Heart right ventricle (tissue), 16 donors: ENCODE measurements at regions of chr2 and their contacts with region 1.

Region 1: GRCh38 chr2:61460163-61460562 is 10.7 kb downstream of the USP34 start:
- DNase-seq: no peak
- ATAC-seq: peak in 1 of 8 donors; percentile 64
- H3K4me3 ChIP-seq: no peak overlapping the region
- H3K27ac ChIP-seq: peak overlapping the region in 2 of 10 donors; percentile 51 to 53
- H3K4me1 ChIP-seq: peaks cover 1 to 73% (median 65%) of the 10 kb centered on the region in 9 donors
- H3K27me3 ChIP-seq: no peaks in the 10 kb centered on the region
- CTCF ChIP-seq: no peak

Region 2: GRCh38 chr2:61356261-61356957 is 103.8 kb before region 1 on chr2:
- intact Hi-C with region 1: loop called in 1 of 10 experiments (anchors 10 kb)
- DNase-seq: no peak
- ATAC-seq: peak in 6 of 8 donors; percentile 17 to 51 (median 26)
- H3K4me3 ChIP-seq: no peak overlapping the region
- H3K27ac ChIP-seq: peak overlapping the region in 4 of 10 donors; percentile 12 to 30 (median 28)
- H3K4me1 ChIP-seq: peaks cover 0 to 47% (median 33%) of the 10 kb centered on the region in 9 donors
- H3K27me3 ChIP-seq: no peaks in the 10 kb centered on the region
- CTCF ChIP-seq: no peak

Region 3: GRCh38 chr2:61368687-61369665 is 91.2 kb before region 1 on chr2:
- intact Hi-C with region 1: no loop called
- DNase-seq: no peak
- ATAC-seq: no peak
- H3K4me3 ChIP-seq: no peak overlapping the region
- H3K27ac ChIP-seq: no peak overlapping the region
- H3K4me1 ChIP-seq: peaks cover 0 to 8% (median 0%) of the 10 kb centered on the region in 9 donors
- H3K27me3 ChIP-seq: no peaks in the 10 kb centered on the region
- CTCF ChIP-seq: no peak

Region 4: DNA sequence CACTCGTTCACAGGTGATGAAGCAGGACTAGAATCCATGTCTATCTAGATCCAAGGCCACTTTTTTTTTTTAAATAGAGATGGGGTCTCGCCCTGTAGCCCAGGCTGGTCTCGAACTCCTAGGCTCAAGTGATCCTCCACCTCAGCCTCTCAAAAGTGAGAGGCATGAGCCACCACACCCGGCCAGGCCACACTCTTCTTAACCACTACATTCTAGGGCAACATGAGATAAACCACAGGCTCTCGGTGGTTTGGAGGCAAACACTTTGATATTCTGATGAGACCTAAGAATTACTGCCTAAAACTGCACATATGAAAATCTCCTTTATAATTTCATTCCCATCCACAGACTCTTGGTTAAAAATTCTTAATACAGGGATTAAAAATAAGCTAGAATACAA is 41.0 kb before region 1 on chr2:
- intact Hi-C with region 1: no loop called
- DNase-seq: no peak
- ATAC-seq: no peak
- H3K4me3 ChIP-seq: no peak overlapping the region
- H3K27ac ChIP-seq: no peak overlapping the region
- H3K4me1 ChIP-seq: peaks cover 5 to 61% (median 56%) of the 10 kb centered on the region in 9 donors
- H3K27me3 ChIP-seq: no peaks in the 10 kb centered on the region
- CTCF ChIP-seq: no peak

Region 5: GRCh38 chr2:61670591-61671501 is 210.7 kb after region 1 on chr2:
- intact Hi-C with region 1: no loop called
- DNase-seq: peak; percentile 28 to 36
- ATAC-seq: peak; percentile 78 to 92 (median 87)
- H3K4me3 ChIP-seq: peak overlapping the region in 9 of 10 donors; percentile 8 to 31 (median 25)
- H3K27ac ChIP-seq: peak overlapping the region; percentile 70 to 89 (median 80)
- H3K4me1 ChIP-seq: peaks cover 4 to 23% (median 19%) of the 10 kb centered on the region in 9 donors
- H3K27me3 ChIP-seq: no peaks in the 10 kb centered on the region
- CTCF ChIP-seq: no peak